ENCODE measurements at regions of chr10 and their contacts with region 1.

Region 1: DNA sequence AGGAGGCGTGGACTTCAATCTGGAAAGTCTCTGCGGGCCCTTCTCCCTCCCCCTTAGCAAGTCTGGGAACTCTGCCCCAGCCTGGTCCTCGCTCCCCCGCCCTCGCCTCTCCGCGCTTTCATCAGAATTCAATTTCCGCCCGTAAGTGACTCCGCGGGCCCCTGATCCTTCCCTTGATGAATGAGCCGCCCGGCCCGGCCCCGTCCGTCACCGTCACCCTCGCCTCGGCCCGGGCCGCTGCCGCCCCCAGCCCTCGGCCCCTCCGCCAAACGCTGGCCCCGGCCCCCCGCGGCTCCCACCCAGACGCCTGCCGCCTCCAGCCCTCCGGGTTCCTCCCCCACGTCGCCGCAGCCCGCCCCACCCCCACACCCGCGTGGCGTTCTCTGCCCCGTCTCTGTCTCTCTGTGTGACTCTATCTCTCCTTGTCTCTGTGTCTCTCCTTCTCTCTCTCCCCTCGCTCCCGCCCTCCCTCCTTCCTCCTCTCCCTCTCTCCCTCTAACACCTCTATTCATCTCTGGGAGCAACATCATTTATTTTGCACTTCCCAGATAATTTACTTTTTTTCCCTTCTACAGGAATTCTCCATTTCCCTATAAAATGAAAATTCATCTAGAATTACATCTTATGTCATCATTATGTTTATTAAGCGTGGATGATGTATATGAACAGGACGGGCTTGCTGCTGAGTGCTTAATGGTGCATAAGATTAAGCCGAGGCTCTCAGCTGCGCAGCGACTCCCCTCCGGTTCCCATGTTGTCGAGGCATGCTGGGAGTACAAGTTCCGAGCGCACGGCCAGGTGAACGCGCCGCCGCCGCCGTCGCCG is 91.2 kb upstream of the PAX2 start:
- DNase-seq: peak; percentile 65
- H3K4me3 Mint-ChIP-seq: peak overlapping the region; percentile 64
- H3K27ac Mint-ChIP-seq: no peak overlapping the region
- H3K4me1 Mint-ChIP-seq: peaks cover 23% of the 10 kb centered on the region
- H3K27me3 Mint-ChIP-seq: peaks cover 60% of the 10 kb centered on the region

Region 2: GRCh38 chr10:100562008-100562711 is 92.0 kb before region 1 on chr10:
- CTCF ChIA-PET with region 1: no interaction called
- POLR2A ChIA-PET with region 1: no interaction called
- intact Hi-C with region 1: loop called (anchors 10 kb)
- DNase-seq: peak; percentile 86
- H3K4me3 Mint-ChIP-seq: no peak overlapping the region
- H3K27ac Mint-ChIP-seq: no peak overlapping the region
- H3K4me1 Mint-ChIP-seq: peaks cover 10% of the 10 kb centered on the region
- H3K27me3 Mint-ChIP-seq: peaks cover 29% of the 10 kb centered on the region

Region 3: DNA sequence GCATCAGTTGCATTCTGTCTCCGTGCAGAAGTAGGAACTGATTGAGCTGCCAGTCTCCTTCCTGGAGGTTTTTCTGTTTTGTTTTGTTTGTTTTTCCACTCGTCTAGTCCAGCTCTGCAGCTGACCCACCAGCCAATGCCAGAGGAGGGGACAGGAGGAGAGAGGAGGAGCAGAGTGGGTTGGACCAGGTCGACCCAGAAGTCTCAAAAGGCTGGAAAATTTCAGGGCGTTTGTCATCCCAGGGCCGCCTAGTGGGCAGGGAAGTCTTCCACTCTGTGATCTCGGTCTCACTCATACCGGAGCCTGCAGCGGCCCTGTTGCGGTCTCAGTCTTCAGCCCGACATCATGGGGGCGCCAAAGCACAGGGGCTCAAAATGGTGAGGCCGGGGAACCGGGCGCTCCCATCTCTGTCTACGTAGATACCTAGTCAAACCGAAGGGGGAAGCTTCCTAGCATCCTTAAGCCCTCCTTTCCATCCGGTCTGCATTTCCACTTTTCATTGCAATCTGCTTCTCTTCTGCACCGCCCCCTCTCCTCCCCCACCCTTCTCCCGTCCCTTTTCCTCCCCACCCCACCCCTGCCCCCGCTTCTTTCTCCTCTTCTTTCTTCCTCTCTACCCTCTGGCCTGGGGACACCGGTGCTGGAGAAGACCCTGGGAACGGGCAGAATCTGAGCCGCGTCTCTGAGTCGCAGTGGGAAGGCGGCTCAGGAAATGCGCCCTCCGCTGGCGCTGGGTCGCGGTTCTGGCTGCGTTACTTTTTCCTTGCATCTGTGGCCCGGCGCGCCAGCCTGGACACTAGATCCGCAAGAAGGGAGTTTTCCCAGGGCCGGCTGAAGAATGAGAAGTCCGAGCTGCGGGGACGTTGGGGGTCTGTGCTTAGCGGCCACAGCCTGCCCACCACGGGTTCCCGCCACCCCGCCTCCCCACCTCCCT is 75.0 kb after region 1 on chr10:
- CTCF ChIA-PET with region 1: no interaction called
- POLR2A ChIA-PET with region 1: no interaction called
- intact Hi-C with region 1: loop called (anchors 5 kb)
- DNase-seq: peak; percentile 63
- H3K4me3 Mint-ChIP-seq: no peak overlapping the region
- H3K27ac Mint-ChIP-seq: no peak overlapping the region
- H3K4me1 Mint-ChIP-seq: peaks cover 20% of the 10 kb centered on the region
- H3K27me3 Mint-ChIP-seq: peaks cover 80% of the 10 kb centered on the region